Activated CD4-positive, alpha-beta T cell treated with anti-CD3 and anti-CD28 coated beads for 36 hours (primary cell): ENCODE measurements at regions of chr14 and their contacts with region 1.

Region 1: DNA sequence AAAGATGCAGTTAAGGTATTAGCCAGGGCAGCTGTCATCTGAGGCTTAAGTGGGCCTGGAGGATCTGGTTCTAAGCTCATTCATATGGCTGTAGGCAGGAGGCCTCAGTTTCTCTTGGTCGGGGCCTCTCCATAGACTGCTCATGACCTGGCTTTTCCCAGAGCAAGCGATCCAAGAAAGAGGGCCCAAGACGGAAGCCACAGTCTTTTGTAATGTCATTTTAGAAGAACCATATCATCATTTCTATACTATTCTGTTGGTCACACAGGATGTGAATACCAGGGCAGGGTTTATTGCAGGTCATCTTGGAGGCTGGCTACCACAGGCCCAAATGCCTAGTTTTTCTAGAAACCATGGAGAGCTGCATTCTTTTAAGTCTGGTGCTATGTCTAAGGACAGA is 47.7 kb downstream of the GNG2 start:
- DNase-seq: no peak
- ATAC-seq: no peak
- H3K4me3 Mint-ChIP-seq: no peak overlapping the region
- H3K27ac Mint-ChIP-seq: peak overlapping the region; percentile 47
- H3K4me1 Mint-ChIP-seq: peaks cover 68% of the 10 kb centered on the region
- H3K27me3 Mint-ChIP-seq: no peaks in the 10 kb centered on the region

Region 2: DNA sequence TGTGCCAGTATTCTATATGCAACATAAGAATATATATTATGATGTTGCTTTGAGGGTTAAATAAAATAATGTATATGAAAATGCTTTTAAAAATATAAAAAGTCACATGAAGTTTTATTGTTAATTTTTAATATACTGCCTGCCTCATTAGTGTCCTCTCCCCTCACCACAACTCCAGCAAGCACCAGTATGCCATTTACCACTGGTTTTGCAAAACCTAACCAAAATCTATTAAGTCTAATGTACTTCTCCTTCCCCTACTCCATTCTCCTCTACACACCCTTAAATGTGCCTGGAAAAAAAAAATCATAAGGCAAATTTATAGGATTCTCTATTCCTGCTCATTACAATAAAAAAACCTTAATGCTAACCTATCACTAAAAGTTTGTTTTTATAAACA is 71.7 kb before region 1 on chr14:
- CTCF ChIA-PET with region 1: no interaction called
- POLR2A ChIA-PET with region 1: no interaction called
- intact Hi-C with region 1: no loop called
- DNase-seq: no peak
- ATAC-seq: no peak
- H3K4me3 Mint-ChIP-seq: no peak overlapping the region
- H3K27ac Mint-ChIP-seq: no peak overlapping the region
- H3K4me1 Mint-ChIP-seq: no peaks in the 10 kb centered on the region
- H3K27me3 Mint-ChIP-seq: no peaks in the 10 kb centered on the region

Region 3: GRCh38 chr14:51939727-51940390 is 31.8 kb after region 1 on chr14:
- CTCF ChIA-PET with region 1: no interaction called
- POLR2A ChIA-PET with region 1: no interaction called
- intact Hi-C with region 1: loop called in 1 of 2 experiments (anchors 5 kb)
- DNase-seq: no peak
- ATAC-seq: no peak
- H3K4me3 Mint-ChIP-seq: no peak overlapping the region
- H3K27ac Mint-ChIP-seq: peak overlapping the region; percentile 18
- H3K4me1 Mint-ChIP-seq: peaks cover 42% of the 10 kb centered on the region
- H3K27me3 Mint-ChIP-seq: no peaks in the 10 kb centered on the region

Region 4: DNA sequence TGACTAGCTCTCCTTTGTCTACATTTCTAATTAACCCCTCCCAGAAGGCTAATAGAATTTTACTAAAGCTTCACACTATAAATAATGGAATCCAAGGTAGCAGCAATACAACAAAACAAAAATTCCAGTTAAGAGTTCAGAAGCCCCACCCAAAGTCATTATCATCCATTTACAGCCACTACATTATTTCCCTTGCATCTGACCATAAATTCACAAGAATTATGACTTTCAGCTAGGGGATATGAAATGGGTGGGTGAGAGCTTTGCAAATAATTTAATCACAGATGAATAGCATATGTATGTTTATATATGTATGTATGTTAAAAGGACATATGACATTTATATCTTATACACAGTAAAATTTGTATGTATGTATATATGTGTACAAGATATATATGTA is 294.1 kb after region 1 on chr14:
- CTCF ChIA-PET with region 1: no interaction called
- POLR2A ChIA-PET with region 1: no interaction called
- intact Hi-C with region 1: no loop called
- DNase-seq: no peak
- ATAC-seq: no peak
- H3K4me3 Mint-ChIP-seq: no peak overlapping the region
- H3K27ac Mint-ChIP-seq: no peak overlapping the region
- H3K4me1 Mint-ChIP-seq: no peaks in the 10 kb centered on the region
- H3K27me3 Mint-ChIP-seq: peaks cover 2% of the 10 kb centered on the region